Activated T-helper 2 cell treated with anti-CD3 and anti-CD28 coated beads, Interferon-gamma antibody, Interleukin-2, Interleukin-4, amounts not matched to agents 10 μg/mL and 5 μg/mL and 100 μg/mL, durations not matched to agents 14 hours and 24 hours and 36 hours (primary cell): ENCODE measurements at regions of chr12 and their contacts with region 1.

Region 1: DNA sequence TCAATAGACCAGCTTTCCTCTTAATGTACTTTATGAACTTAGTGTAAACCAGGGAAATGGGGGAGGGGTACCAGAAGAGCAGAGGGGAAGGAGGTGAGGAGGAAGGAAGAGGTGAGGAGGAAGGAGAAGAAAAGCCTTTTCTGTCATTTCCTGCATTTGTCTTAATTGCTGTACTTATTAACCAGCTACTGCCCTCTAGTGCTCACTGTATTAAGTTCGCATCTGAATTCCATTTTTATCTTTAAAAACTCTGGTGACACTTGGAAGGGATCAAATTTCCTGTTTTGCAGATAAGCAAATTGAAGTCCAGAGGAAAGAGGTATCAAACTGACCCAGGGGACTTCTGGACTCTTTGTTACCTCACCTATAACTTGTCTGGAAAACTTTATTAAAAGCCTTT is 22.2 kb downstream of the MANSC1 start:
- DNase-seq: no peak
- H3K4me3 Mint-ChIP-seq: no peak overlapping the region
- H3K27ac Mint-ChIP-seq: no peak overlapping the region
- H3K4me1 Mint-ChIP-seq: peaks cover 18% of the 10 kb centered on the region
- H3K27me3 Mint-ChIP-seq: peaks cover 12% of the 10 kb centered on the region

Region 2: DNA sequence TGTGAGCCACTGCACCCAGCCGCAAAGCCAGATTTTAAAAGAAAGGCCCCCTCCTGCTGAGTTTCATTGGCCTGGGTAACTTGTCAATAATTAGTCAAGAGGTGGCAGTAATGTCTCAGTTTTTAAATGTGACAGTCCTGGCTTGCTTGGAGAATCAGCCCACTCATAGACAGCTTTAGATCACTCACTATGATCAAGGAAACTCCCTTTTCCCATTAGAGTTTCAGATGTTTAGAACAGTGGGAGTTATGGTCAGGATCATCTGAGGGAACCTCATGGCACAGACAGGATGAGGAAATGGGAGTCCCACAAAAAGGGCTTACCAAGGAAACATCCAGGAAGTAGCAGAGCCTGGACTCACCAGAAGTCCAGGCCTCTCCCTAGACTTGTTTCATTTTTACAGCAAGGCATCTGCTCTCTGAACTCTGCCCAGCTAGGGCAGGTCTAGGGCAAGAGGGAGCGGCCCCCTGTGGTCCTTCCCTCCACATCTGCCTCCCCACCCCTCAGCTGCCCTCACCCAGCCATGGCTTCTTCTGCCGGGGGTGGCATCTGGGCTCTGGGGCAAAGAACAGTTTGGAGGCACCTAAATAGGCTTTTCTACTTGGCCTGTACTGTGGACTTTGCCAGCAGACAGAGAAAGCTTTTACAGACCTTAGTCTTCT is 245.8 kb before region 1 on chr12:
- intact Hi-C with region 1: loop called (anchors 5 kb)
- DNase-seq: no peak
- H3K4me3 Mint-ChIP-seq: no peak overlapping the region
- H3K27ac Mint-ChIP-seq: no peak overlapping the region
- H3K4me1 Mint-ChIP-seq: no peaks in the 10 kb centered on the region
- H3K27me3 Mint-ChIP-seq: peaks cover 6% of the 10 kb centered on the region

Region 3: GRCh38 chr12:12240662-12241340 is 87.0 kb before region 1 on chr12:
- intact Hi-C with region 1: no loop called
- DNase-seq: no peak
- H3K4me3 Mint-ChIP-seq: no peak overlapping the region
- H3K27ac Mint-ChIP-seq: no peak overlapping the region
- H3K4me1 Mint-ChIP-seq: no peaks in the 10 kb centered on the region
- H3K27me3 Mint-ChIP-seq: peaks cover 49% of the 10 kb centered on the region

Region 4: DNA sequence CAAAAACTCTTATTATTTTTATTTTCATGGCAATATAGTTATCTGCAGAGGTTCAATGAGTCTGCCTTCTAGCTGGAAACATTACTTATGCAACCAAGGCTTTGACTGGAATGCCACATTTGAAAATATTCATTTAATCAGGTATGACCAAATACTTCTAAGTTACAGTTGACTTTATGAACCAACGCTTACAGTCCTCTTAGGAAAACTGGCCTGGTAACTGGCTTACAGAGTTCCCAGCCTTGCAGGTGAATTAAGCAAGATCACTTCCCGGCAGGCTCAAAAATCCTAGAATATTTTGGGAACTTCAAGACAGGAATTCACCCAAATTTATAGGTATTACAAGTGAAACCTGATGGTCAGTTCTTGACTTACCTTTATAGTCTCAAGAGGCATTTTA is 73.2 kb before region 1 on chr12:
- intact Hi-C with region 1: no loop called
- DNase-seq: no peak
- H3K4me3 Mint-ChIP-seq: no peak overlapping the region
- H3K27ac Mint-ChIP-seq: no peak overlapping the region
- H3K4me1 Mint-ChIP-seq: peaks cover 4% of the 10 kb centered on the region
- H3K27me3 Mint-ChIP-seq: peaks cover 8% of the 10 kb centered on the region

Region 5: GRCh38 chr12:12272869-12273268 is 54.9 kb before region 1 on chr12:
- intact Hi-C with region 1: no loop called
- DNase-seq: no peak
- H3K4me3 Mint-ChIP-seq: no peak overlapping the region
- H3K27ac Mint-ChIP-seq: no peak overlapping the region
- H3K4me1 Mint-ChIP-seq: no peaks in the 10 kb centered on the region
- H3K27me3 Mint-ChIP-seq: peaks cover 19% of the 10 kb centered on the region

Region 6: DNA sequence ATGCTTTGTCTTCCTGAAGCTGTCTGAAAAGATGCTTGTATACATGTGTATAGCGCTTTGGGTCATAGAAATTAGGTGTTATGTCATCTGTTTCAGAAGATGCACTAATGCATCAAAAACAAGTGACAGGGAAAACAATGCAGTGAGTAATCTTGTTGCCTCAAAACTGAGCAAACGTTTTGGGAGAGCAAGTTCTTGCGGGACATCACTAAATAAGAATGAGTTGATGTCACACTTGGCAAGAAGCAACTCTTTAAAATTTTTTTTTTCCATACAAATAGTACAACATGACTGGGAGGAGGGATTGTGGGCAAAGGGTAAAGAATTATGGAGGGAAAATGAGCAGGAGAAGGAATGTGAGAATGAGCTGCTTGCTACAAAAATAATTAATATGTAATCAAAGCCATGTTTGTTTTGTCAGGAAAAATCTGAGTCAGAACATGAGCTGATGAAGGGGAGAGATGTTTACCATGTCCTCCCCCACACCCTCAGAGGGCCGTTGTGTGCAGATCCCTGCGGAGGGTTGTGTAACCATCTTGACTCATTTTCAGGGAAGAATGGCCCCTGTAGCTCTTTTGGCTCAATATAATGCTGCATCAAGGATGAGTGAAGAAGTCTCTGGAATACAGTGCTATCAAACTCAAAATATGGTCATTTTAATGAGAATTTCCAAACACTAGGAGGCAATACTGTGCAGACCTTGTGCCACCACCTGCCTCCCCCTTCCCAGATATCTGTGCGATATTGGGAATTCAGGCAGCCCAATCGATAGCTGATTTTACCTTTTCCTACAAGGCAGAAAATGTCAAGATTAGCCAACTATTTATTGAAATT is 70.4 kb after region 1 on chr12:
- intact Hi-C with region 1: no loop called
- DNase-seq: no peak
- H3K4me3 Mint-ChIP-seq: no peak overlapping the region
- H3K27ac Mint-ChIP-seq: no peak overlapping the region
- H3K4me1 Mint-ChIP-seq: peaks cover 41% of the 10 kb centered on the region
- H3K27me3 Mint-ChIP-seq: no peaks in the 10 kb centered on the region